Upper lobe of right lung (tissue), 1 donor: ENCODE measurements at regions of chr10 and their contacts with region 1.

Region 1: DNA sequence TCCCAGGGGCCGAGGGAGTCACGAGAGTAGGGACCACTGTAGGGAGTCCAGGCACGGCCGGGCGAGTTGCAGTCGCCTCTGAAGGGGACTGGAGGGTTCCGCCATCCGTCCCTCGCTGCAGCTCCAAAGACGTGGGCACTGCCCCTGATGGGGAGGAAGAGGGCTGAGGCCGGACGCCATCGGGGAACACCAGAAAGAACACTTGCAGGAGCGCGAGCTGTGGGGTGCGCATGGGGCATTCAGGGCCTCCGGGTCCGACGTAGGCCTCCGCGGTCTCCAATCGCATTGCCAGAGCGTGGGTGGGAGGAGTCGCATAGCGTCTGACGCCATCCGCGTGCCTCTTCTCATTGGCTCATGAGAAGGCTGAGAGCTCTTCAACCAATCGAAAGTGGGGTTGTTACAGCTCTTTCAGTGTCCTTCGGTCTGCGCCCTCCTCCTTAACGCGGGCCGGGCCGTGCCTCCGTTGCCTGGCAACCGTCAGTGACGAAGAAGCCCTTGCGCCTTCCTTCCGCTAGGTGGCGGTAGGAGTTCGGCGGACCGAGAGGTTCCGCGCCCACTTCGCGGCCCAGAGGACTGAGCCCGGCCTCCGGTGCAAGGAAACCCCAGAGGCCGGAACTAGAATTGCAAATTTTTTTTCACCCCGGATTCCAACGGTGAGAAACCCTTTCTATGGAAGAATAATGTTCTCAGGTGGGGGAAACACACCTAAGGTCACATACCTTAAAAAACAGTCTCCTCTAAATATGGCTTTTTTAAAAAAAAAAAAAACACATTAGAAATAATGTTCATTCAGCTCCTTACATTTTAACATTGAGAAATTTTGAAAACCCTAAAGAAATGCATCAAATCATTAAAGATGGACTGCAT is at the start of gene TCTN3:
- DNase-seq: peak; percentile 96
- ATAC-seq: peak; percentile 99
- H3K4me3 ChIP-seq: peak within 1 kb of the TSS; percentile 79
- H3K27ac ChIP-seq: peak within 1 kb of the TSS; percentile 82
- H3K4me1 ChIP-seq: peaks cover 19% of the 10 kb centered on the region
- H3K27me3 ChIP-seq: no peaks in the 10 kb centered on the region
- CTCF ChIP-seq: peak; percentile 98
- total RNA-seq, gene TCTN3: 29.0 TPM

Region 2: DNA sequence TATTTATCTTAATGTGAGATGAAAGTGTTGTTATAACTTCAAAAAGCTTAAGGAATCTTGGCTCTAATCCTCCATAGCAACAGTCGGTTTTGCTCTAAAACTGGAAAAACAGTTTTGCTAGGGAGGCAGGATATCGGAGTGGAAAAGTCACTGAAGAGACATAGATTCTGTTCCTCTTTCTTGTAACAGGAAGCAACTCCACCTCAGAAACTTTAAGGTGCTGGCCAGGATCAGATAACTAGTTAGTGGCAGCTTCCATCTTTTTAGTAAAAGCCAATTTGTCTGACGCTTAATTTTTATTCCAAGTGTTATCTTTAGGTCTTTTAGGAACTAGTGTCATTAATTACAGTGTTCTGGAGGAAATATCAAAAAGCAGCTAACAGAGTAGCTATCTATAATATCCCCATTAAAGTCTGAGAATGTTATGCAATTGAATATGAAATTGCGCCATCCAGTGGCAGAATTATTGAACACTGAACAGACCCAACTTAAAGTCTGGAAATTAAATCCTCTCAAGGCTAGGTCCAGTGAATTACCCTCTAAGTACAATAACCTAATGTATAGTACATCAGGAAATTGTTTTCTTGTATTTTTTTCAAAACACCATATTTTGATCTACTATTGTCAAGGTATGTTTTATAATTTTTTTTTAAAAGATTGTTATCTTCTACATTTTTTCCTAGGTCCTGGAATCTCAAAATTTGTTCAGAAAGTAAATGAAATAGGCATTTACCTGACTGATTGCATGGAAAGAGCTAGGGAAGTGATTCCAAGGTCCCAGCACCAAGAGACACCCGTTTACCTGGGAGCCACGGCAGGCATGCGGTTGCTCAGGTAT is 148.0 kb after region 1 on chr10:
- intact Hi-C with region 1: loop called (anchors 10 kb)
- DNase-seq: no peak
- ATAC-seq: peak; percentile 60
- H3K4me3 ChIP-seq: no peak overlapping the region
- H3K27ac ChIP-seq: peak overlapping the region; percentile 39
- H3K4me1 ChIP-seq: peaks cover 11% of the 10 kb centered on the region
- H3K27me3 ChIP-seq: no peaks in the 10 kb centered on the region
- CTCF ChIP-seq: peak; percentile 72

Region 3: DNA sequence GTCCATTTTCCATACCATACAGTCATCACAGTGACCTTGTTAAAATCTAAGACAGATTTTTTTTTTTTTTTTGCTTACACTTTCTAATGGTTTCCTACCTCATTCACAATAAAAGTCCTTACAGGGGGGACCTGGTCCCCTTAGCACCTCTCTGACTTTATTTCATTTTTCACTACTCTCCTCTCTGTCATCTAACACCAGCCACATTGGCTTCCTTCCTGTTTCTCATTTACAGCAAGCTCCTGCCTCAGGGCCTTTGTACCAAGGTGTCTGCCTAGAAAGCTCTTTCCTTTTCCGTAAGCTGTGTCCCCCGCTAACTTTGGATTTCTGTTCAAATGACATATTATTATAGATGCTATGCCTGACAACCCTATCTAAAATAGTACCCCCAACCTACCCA is 241.5 kb after region 1 on chr10:
- intact Hi-C with region 1: no loop called
- DNase-seq: no peak
- ATAC-seq: no peak
- H3K4me3 ChIP-seq: no peak overlapping the region
- H3K27ac ChIP-seq: no peak overlapping the region
- H3K4me1 ChIP-seq: no peaks in the 10 kb centered on the region
- H3K27me3 ChIP-seq: no peaks in the 10 kb centered on the region
- CTCF ChIP-seq: no peak